Sigmoid colon (tissue), 7 donors: ENCODE measurements at regions of chr18 and their contacts with region 1.

Region 1: GRCh38 chr18:48675352-48675761 is 136.5 kb downstream of the CTIF start:
- DNase-seq: peak; percentile 92
- H3K4me3 ChIP-seq: no peak overlapping the region
- H3K27ac ChIP-seq: no peak overlapping the region
- H3K4me1 ChIP-seq: peaks cover 0 to 50% (median 30%) of the 10 kb centered on the region in 4 donors
- H3K27me3 ChIP-seq: no peaks in the 10 kb centered on the region
- CTCF ChIP-seq: peak; percentile 77 to 93 (median 84)
- EP300 ChIP-seq: no peak
- POLR2A ChIP-seq: no peak

Region 2: DNA sequence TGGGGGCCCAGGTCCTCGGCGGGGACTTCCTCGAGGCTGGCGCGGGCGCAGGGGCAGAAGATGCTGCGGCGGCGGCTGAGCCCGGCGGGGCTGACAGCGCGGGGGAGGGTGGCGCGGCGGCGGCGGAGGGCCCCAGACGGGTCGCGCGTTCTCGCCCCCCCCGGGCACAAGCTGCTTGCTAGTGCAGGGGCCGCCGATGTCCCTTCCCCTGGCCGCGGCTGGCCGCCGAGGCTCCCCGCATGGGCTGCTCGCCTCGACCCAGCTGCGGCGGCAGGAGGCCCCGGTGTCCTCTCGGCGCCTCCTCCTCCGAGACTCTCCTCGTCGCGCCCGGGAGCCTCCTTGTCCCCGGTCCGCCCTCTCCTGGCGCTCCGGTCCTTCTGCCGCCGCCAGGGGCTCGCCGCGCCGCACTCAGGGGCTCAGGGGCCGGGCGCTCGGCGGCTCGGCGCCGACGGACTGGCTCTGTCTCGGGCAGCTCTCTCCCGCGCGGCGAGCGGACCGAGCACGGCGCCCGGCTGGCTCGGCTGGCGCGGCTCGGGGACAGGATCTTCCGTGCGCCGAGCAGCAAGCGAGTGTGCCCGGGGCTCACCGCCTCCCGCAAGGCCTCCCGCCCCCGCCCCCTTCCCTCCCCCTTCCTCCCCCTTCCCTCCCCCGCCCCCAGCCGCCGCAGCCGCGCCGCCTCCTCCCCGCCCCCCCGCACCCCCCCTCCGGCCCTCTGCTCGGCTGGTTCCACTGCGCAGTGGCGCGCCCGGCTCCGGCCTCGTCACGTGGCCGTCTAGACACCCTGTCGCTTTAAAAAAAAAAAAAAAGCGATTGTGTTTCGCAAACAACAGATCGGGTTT is 276.3 kb after region 1 on chr18:
- intact Hi-C with region 1: loop called (anchors 5 kb)
- DNase-seq: peak; percentile 95
- H3K4me3 ChIP-seq: peak overlapping the region; percentile 76 to 96 (median 93)
- H3K27ac ChIP-seq: peak overlapping the region; percentile 93 to 99 (median 97)
- H3K4me1 ChIP-seq: peaks cover 0 to 50% (median 40%) of the 10 kb centered on the region in 4 donors
- H3K27me3 ChIP-seq: no peaks in the 10 kb centered on the region
- CTCF ChIP-seq: peak in 1 of 4 experiments; percentile 45
- EP300 ChIP-seq: peak in 1 of 4 donors; percentile 24
- POLR2A ChIP-seq: peak in 1 of 2 donors; percentile 15

Region 3: DNA sequence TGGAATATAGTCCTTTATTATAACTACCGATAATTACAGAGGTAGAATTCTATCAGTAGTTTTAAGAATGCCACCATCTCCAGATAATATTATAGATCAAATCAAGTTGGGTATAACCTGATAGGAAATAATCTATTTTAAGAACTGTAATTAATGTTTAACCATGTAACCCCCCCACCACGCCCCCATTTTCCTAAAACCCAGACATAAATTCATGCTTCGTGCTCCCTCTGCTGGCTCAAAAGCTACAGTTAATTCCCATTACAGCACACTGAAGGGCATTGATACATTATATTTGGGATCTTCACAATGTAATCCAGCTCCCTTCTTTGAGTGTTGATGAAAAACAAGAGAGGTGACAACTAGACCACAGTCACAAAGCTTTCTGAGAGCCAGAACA is 503.4 kb after region 1 on chr18:
- intact Hi-C with region 1: loop called (anchors 2 kb)
- DNase-seq: no peak
- H3K4me3 ChIP-seq: no peak overlapping the region
- H3K27ac ChIP-seq: no peak overlapping the region
- H3K4me1 ChIP-seq: no peaks in the 10 kb centered on the region
- H3K27me3 ChIP-seq: no peaks in the 10 kb centered on the region
- CTCF ChIP-seq: peak; percentile 7 to 27 (median 24)
- EP300 ChIP-seq: no peak
- POLR2A ChIP-seq: no peak

Region 4: DNA sequence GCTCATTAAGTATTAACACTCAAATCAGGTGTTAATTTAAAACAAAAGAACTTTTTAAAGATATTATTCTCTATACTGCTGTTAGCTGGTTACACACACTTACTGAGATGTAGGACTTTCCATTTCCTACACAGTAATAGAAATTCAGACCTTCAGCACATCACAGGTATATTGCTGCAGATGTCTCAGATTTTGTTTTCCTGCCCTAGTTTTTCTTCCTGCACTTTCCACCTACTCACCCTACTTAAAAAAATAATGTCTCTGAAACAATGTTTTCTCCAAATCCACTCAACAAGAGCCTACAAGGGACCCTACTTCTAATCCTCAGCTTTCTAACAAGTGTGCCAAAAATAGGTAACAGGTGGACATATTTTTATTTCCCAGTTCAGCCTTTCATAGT is 741.2 kb after region 1 on chr18:
- intact Hi-C with region 1: loop called (anchors 5 kb)
- DNase-seq: no peak
- H3K4me3 ChIP-seq: no peak overlapping the region
- H3K27ac ChIP-seq: no peak overlapping the region
- H3K4me1 ChIP-seq: peaks cover 0 to 20% (median 8%) of the 10 kb centered on the region in 4 donors
- H3K27me3 ChIP-seq: no peaks in the 10 kb centered on the region
- CTCF ChIP-seq: no peak
- EP300 ChIP-seq: no peak
- POLR2A ChIP-seq: no peak

Region 5: DNA sequence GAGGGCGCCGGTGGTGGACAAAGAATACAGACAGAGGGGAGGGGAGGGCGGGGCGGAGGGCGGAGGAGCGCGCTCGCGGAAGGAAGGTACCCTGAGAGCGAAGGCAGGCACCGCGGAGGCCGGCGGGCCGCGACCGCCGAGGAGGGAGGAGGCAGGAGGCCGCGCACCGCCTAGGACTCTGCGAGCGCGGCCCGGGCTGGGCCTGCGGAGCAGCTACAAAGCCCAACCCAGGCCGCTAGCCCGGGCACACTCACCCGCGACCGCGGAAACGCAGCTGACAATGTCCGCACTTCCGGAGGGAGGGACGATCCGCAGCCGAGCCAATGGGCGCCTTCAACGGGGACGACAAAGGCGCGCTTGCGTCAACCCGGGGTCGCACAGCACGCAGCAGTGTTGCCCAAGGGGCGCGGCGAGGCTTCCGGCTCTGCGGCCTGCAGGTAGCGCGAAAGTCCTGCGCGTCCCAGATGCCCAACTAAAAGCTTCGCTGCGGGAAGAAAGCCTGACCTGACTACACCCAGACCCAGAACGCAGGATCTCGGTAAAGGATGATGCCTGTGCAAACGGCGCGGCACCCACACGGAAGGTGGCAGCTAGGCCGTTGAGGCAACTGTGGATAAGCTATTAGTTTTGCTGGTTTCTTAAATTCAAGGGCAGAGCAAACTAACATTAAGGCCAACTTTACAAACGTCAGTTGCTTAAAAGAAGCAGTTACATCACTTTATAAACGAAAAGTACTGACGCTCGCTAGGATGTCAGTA is 811.8 kb after region 1 on chr18 and contains the start of gene C18orf32:
- intact Hi-C with region 1: loop called (anchors 10 kb)
- DNase-seq: peak; percentile 98
- H3K4me3 ChIP-seq: peak within 1 kb of the TSS; percentile 67 to 92 (median 86)
- H3K27ac ChIP-seq: peak within 1 kb of the TSS; percentile 93 to 98 (median 96)
- H3K4me1 ChIP-seq: peaks cover 0 to 46% (median 37%) of the 10 kb centered on the region in 4 donors
- H3K27me3 ChIP-seq: no peaks in the 10 kb centered on the region
- CTCF ChIP-seq: no peak
- EP300 ChIP-seq: no peak
- POLR2A ChIP-seq: peak; percentile 92 to 94
- total RNA-seq, gene C18orf32: 29.1 to 57.8 (median 45.8) TPM